Activated naive CD8-positive, alpha-beta T cell treated with anti-CD3 and anti-CD28 coated beads, Interleukin-2, amount 10 ng/mL, durations not matched to agents 7 days and 5 days (primary cell): ENCODE measurements at regions of chr14 and their contacts with region 1.

Region 1: GRCh38 chr14:88005978-88006851 is 1.3 kb downstream of the GPR65 start:
- DNase-seq: no peak
- ATAC-seq: peak; percentile 86
- H3K4me3 Mint-ChIP-seq: peak overlapping the region; percentile 84
- H3K27ac Mint-ChIP-seq: peak overlapping the region; percentile 93
- H3K4me1 Mint-ChIP-seq: peaks cover 60% of the 10 kb centered on the region
- H3K27me3 Mint-ChIP-seq: no peaks in the 10 kb centered on the region

Region 2: GRCh38 chr14:87952307-87953094 is 53.7 kb before region 1 on chr14:
- POLR2A ChIA-PET with region 1: interaction called, 21 read pairs
- DNase-seq: no peak
- ATAC-seq: peak; percentile 85
- H3K4me3 Mint-ChIP-seq: peak overlapping the region; percentile 78
- H3K27ac Mint-ChIP-seq: peak overlapping the region; percentile 91
- H3K4me1 Mint-ChIP-seq: peaks cover 34% of the 10 kb centered on the region
- H3K27me3 Mint-ChIP-seq: no peaks in the 10 kb centered on the region

Region 3: DNA sequence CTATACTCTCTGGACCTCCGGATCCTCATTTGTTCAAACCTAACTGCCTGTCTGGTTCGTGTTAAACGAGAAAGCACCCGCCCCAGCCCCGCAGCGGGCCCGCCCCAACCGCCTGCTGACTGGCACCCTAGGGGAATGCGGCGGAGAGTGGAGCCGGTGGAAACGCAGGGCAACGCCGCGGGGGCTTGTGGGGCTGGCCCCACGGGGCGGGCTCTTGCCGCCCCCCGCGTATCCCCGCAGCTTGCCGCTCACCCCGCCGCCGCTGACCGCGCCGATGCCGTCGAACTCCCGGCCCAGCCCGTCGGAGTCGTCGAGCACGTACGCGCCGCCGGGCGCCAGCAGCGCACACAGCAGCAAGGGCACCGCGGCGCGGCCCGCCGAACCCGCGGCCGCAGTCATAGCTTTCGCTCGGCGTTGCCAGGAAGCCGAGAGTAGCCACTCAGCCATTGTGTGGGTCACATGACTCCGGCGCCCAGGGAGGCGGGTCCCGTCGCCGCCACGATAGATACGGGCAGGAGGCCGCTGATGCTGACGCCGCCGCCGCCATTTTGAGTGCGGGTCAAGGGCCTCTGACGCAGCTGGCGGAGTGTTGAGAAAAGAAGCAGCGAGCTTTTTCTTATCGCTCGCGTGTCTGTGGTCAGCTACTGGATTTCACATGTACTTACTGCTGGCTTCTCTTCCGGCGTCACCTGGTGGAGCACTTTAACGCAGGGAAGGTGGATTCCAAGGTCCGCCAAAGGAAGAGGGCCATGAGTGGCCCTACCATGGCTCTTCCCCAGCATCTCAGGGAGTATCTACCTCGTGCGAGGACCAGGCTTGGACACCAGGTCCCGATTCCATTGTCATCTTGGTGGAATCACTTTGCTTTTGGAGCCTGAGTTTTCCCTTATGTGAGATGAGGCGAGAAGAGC is 13.2 kb before region 1 on chr14 and contains the start of gene GALC:
- POLR2A ChIA-PET with region 1: interaction called, 169 read pairs
- DNase-seq: peak; percentile 95
- ATAC-seq: peak; percentile 95
- H3K4me3 Mint-ChIP-seq: peak within 1 kb of the TSS; percentile 99
- H3K27ac Mint-ChIP-seq: peak within 1 kb of the TSS; percentile 96
- H3K4me1 Mint-ChIP-seq: peaks cover 61% of the 10 kb centered on the region
- H3K27me3 Mint-ChIP-seq: no peaks in the 10 kb centered on the region
- total RNA-seq, gene GALC: 24.7 to 28.2 TPM

Region 4: GRCh38 chr14:88026890-88027289 is 20.7 kb after region 1 on chr14:
- POLR2A ChIA-PET with region 1: interaction called, 10 read pairs
- DNase-seq: no peak
- ATAC-seq: peak; percentile 57
- H3K4me3 Mint-ChIP-seq: peak overlapping the region; percentile 61
- H3K27ac Mint-ChIP-seq: peak overlapping the region; percentile 91
- H3K4me1 Mint-ChIP-seq: peaks cover 68% of the 10 kb centered on the region
- H3K27me3 Mint-ChIP-seq: no peaks in the 10 kb centered on the region

Region 5: GRCh38 chr14:88245321-88245720 is 239.1 kb after region 1 on chr14:
- POLR2A ChIA-PET with region 1: no interaction called
- DNase-seq: no peak
- ATAC-seq: no peak
- H3K4me3 Mint-ChIP-seq: no peak overlapping the region
- H3K27ac Mint-ChIP-seq: no peak overlapping the region
- H3K4me1 Mint-ChIP-seq: no peaks in the 10 kb centered on the region
- H3K27me3 Mint-ChIP-seq: peaks cover 14% of the 10 kb centered on the region